Activated CD8-positive, alpha-beta T cell treated with anti-CD3 and anti-CD28 coated beads, Interleukin-2, amount 10 ng/mL, durations not matched to agents 7 days and 5 days (primary cell): ENCODE measurements at regions of chr7 and their contacts with region 1.

Region 1: GRCh38 chr7:91953618-91954017 is 13.0 kb downstream of the AKAP9 start:
- DNase-seq: no peak
- ATAC-seq: no peak
- H3K4me3 Mint-ChIP-seq: no peak overlapping the region
- H3K27ac Mint-ChIP-seq: no peak overlapping the region
- H3K4me1 Mint-ChIP-seq: peaks cover 12% of the 10 kb centered on the region
- H3K27me3 Mint-ChIP-seq: no peaks in the 10 kb centered on the region

Region 2: GRCh38 chr7:91892821-91893340 is 60.7 kb before region 1 on chr7:
- CTCF ChIA-PET with region 1: no interaction called
- POLR2A ChIA-PET with region 1: no interaction called
- DNase-seq: no peak
- ATAC-seq: no peak
- H3K4me3 Mint-ChIP-seq: no peak overlapping the region
- H3K27ac Mint-ChIP-seq: no peak overlapping the region
- H3K4me1 Mint-ChIP-seq: no peaks in the 10 kb centered on the region
- H3K27me3 Mint-ChIP-seq: peaks cover 10% of the 10 kb centered on the region

Region 3: DNA sequence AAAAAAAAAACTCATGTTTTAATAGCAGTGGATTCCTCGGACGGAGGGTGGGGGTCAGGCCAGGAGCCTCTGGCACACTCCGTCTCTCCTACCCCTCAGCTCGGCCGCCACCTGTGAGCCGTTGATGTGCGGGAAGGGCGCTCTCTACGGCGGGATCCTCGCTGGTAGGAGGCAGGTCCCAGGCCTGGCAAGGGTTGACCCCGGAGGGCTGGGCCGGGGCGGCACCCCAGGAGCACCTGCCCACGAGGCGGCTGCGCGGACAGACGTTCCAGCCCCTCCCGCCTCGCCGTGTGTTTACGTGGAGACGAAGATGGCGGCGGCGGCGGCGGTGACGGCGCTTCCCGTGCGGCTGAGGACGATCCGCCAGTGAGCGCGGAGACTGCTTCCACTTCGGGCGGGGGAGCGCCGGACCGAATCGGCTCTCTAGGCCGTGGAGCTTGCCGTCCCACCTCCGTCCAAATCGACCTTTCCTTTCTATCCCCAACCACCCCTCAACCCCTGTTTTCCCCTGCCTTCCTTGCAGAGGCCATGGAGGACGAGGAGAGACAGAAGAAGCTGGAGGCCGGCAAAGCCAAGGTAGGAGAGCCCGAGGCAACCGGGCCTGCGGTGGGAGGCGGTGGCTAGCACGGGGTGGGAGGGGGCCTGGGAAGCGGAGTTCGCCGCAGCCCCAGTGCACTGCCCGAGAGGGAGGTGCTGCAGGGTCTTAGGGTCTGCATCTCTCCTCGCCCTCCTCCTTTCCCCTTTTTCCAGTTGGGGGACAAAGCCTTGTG is 12.9 kb before region 1 on chr7 and contains the start of gene AKAP9:
- CTCF ChIA-PET with region 1: interaction called, 15 read pairs
- POLR2A ChIA-PET with region 1: interaction called, 4 read pairs
- DNase-seq: peak; percentile 92
- ATAC-seq: peak; percentile 96
- H3K4me3 Mint-ChIP-seq: peak within 1 kb of the TSS; percentile 86
- H3K27ac Mint-ChIP-seq: peak within 1 kb of the TSS; percentile 95
- H3K4me1 Mint-ChIP-seq: peaks cover 22% of the 10 kb centered on the region
- H3K27me3 Mint-ChIP-seq: no peaks in the 10 kb centered on the region
- total RNA-seq, gene AKAP9: 32.7 to 41.5 TPM

Region 4: GRCh38 chr7:91979590-91979989 is 26.0 kb after region 1 on chr7:
- CTCF ChIA-PET with region 1: no interaction called
- POLR2A ChIA-PET with region 1: no interaction called
- DNase-seq: no peak
- ATAC-seq: no peak
- H3K4me3 Mint-ChIP-seq: no peak overlapping the region
- H3K27ac Mint-ChIP-seq: no peak overlapping the region
- H3K4me1 Mint-ChIP-seq: peaks cover 8% of the 10 kb centered on the region
- H3K27me3 Mint-ChIP-seq: no peaks in the 10 kb centered on the region

Region 5: DNA sequence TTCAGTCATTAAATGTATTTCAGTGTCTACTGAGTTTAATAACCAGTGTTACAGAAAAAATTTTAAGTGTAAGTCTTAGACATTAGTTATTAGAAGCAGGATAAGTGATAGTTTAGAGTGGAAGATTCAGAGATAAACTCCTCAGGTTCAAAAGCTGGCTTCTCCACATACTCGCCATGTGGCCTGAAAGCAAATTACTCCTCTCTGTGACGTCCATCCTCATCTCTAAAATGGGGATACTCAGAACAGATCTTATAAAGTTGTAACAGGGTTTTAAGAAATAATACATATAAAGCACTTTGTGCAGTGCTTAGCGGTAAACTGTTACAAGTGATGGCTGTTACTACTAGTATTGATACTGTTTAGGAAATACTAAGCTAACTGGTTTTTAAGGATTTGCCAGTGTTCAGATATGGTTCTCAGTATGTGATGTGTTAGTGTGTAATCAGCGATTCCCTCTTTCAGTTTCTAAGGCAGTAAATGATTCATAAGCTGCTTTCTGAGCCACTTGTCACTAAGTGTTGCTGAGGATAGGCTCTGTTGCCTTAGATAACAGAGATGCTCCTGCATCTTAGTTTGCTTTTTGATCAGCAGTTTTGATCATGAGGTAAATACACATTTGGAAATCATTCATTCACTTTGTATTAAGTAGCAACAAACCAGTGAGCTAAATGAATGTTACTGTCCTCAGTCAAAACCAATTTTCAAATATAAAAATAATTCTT is 122.0 kb after region 1 on chr7:
- CTCF ChIA-PET with region 1: no interaction called
- POLR2A ChIA-PET with region 1: no interaction called
- DNase-seq: no peak
- ATAC-seq: no peak
- H3K4me3 Mint-ChIP-seq: no peak overlapping the region
- H3K27ac Mint-ChIP-seq: no peak overlapping the region
- H3K4me1 Mint-ChIP-seq: peaks cover 6% of the 10 kb centered on the region
- H3K27me3 Mint-ChIP-seq: no peaks in the 10 kb centered on the region